ENCODE measurements at regions of chrX and their contacts with region 1.

Region 1: DNA sequence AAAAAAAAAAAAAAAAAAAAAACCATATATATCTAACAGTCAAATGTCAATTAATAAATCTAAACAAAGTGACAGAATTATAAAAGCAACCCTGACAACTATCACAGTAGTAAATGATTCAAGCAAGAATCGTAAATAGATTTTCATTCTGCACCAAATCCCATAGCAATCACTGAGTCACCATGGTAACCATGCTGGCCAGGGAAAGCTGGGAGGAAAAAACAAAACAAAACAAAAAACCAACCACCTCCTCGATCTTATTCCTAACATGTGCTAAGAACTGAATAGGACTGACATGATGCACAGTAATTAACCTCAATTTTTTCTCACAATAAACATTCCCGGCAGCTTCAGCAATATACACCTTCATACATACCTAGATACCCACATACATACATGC is 30.6 kb upstream of the RAB40A start:
- DNase-seq: no peak
- H3K4me3 ChIP-seq: no peak overlapping the region
- H3K27ac ChIP-seq: no peak overlapping the region
- H3K4me1 ChIP-seq: no peaks in the 10 kb centered on the region
- H3K27me3 ChIP-seq: peaks cover 11% of the 10 kb centered on the region
- CTCF ChIP-seq: no peak

Region 2: DNA sequence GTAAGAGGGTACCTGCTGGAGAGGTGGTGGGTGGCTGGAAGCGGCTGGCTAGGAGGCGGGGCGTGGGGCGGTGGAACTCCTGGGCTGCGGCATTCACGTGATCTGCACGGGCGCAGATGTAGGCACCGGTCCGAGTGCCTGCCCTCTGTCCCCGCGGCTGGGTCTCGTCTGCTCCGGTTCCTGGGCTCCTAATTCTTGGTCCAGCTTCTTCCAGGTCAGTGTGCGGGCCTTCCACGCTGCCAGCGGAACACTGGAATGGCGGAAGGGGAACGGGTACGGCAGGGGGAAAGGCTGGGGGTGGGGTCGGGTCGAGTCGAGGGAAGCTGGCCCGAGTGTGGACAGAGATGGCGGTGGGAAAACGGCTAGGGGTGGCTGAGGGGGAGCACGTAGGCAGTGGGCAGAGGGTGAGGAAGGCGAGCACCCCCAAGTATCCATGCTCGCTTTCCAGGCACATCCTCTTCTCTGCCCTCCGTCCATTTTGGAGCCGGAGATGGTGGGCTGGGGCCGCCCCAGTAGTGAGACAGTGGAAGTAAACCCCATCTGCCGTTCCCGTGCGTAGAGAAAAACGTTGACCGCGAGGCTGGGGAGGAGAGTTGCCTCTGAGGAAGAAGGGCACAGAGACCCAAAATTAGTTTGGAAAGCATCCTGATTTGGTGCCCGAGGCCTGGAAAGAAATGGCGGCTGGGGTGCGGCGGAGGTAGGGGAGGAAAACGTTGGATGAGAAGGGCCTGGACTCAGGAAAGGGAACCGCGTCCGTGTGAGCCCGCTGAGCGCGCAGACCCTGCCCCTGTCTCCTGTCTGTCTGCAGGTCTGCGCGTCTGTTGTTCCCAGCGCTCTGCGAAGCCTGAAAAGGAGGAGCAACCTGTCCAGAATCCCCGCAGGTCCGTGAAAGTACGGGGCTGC is 35.7 kb after region 1 on chrX and contains the start of gene TCEAL4:
- CTCF ChIA-PET with region 1: interaction called, 11 read pairs
- POLR2A ChIA-PET with region 1: no interaction called
- intact Hi-C with region 1: no loop called
- DNase-seq: peak; percentile 26
- H3K4me3 ChIP-seq: peak within 1 kb of the TSS; percentile 62
- H3K27ac ChIP-seq: peak within 1 kb of the TSS; percentile 47
- H3K4me1 ChIP-seq: no peaks in the 10 kb centered on the region
- H3K27me3 ChIP-seq: peaks cover 5% of the 10 kb centered on the region
- CTCF ChIP-seq: no peak
- total RNA-seq, gene TCEAL4: 37.3 and 39.7 TPM in 2 replicates